Natural killer cell (primary cell): ENCODE measurements at regions of chr2 and their contacts with region 1.

Region 1: GRCh38 chr2:157336137-157337010 is 10.8 kb upstream of the ERMN start:
- DNase-seq: peak in 1 of 2 donors; percentile 78
- ATAC-seq: peak in 2 of 3 donors; percentile 44 to 57
- H3K4me3 ChIP-seq: no peak overlapping the region
- H3K4me3 Mint-ChIP-seq: peak overlapping the region; percentile 47
- H3K27ac ChIP-seq: no peak overlapping the region
- H3K27ac Mint-ChIP-seq: no peak overlapping the region
- H3K4me1 ChIP-seq: peaks cover 11% of the 10 kb centered on the region
- H3K4me1 Mint-ChIP-seq: peaks cover 25 to 35% of the 10 kb centered on the region in 2 donors
- H3K27me3 ChIP-seq: no peaks in the 10 kb centered on the region
- H3K27me3 Mint-ChIP-seq: no peaks in the 10 kb centered on the region
- CTCF ChIP-seq: peak; percentile 78

Region 2: DNA sequence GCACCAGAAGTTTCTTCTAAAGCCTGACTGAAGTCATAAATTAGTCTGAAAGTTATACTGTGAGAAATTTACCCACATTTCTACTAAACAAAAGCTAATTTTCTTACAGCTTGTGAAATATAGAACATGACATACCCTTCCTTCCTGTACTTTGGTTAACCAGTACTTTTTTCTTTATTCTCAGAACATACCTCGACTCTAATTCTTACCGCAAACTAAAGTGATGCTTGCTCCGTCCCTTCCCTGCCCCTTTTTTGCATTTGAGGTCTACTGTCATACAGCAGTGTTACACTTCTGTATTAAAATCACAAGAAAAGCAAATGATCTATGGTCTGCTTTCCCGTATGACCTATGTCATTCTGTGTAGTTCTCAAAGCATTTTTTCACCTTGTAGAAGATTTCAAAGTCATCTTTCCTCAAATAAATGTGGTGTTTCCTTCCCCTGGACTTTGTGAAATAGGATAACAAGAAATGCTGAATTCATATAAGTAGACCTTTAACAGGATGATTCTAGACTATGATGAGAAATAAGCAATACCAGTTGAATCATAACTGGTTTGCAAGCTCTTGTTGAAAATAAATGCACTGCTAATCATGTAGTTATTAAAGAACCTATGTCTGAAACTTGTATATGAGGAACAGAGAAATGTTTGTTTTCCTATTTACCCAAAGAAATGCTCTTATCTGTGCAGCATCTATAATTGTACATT is 77.1 kb after region 1 on chr2:
- intact Hi-C with region 1: loop called (anchors 5 kb)
- DNase-seq: peak in 1 of 2 donors; percentile 86
- ATAC-seq: peak; percentile 71 to 90 (median 85)
- H3K4me3 ChIP-seq: no peak overlapping the region
- H3K4me3 Mint-ChIP-seq: peak overlapping the region; percentile 80
- H3K27ac ChIP-seq: peak overlapping the region; percentile 86
- H3K27ac Mint-ChIP-seq: peak overlapping the region; percentile 82 to 94
- H3K4me1 ChIP-seq: peaks cover 34% of the 10 kb centered on the region
- H3K4me1 Mint-ChIP-seq: peaks cover 76 to 91% of the 10 kb centered on the region in 2 donors
- H3K27me3 ChIP-seq: no peaks in the 10 kb centered on the region
- H3K27me3 Mint-ChIP-seq: no peaks in the 10 kb centered on the region
- CTCF ChIP-seq: no peak

Region 3: GRCh38 chr2:157596992-157597681 is 260.8 kb after region 1 on chr2:
- intact Hi-C with region 1: no loop called
- DNase-seq: peak; percentile 27 to 70
- ATAC-seq: peak; percentile 64 to 78 (median 72)
- H3K4me3 ChIP-seq: no peak overlapping the region
- H3K4me3 Mint-ChIP-seq: peak overlapping the region; percentile 13
- H3K27ac ChIP-seq: no peak overlapping the region
- H3K27ac Mint-ChIP-seq: no peak overlapping the region
- H3K4me1 ChIP-seq: peaks cover 5% of the 10 kb centered on the region
- H3K4me1 Mint-ChIP-seq: peaks cover 0 to 5% of the 10 kb centered on the region in 2 donors
- H3K27me3 ChIP-seq: peaks cover 12% of the 10 kb centered on the region
- H3K27me3 Mint-ChIP-seq: peaks cover 35 to 51% of the 10 kb centered on the region in 2 donors
- CTCF ChIP-seq: peak; percentile 58